ENCODE measurements at regions of chr2 and their contacts with region 1.

Region 1: DNA sequence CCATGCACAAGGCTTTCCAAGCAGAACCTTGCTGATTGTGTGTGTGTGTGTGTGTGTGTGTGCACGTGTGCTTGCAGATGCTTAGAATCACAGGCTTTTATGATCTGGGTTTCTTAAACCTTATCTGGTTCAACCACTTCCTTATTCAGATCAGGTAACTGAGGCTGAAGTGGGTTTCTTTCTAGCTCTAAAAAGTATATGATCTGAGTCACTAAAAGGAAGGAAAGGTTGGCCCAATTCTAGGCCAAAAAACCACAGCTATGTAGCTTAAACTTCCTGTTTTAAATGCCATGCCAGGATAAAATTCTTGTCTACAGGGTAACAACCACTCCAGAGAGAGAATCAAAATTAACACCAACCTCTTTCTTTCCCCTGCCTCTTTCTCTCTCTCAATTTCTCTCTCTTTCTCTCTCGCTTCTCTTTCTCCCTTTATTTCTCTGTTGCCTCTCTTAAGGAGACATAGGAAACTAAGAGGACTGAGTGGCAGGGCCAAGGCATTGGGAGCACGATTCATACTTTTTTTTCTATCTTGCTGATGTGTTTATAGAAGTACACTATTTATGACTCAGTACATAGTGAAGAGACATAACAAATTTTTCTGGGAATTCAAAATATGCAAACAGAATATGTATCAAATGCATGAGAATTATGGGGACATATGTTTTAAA is 140.3 kb downstream of the TRIB2 start:
- DNase-seq: peak; percentile 31 to 98
- H3K4me3 ChIP-seq: peak overlapping the region; percentile 30; the same call in 1 of the 2 replicates
- H3K27ac ChIP-seq: peak overlapping the region; percentile 92
- H3K4me1 ChIP-seq: peaks cover 46% of the 10 kb centered on the region
- H3K27me3 ChIP-seq: no peaks in the 10 kb centered on the region
- CTCF ChIP-seq: no peak

Region 2: GRCh38 chr2:12828784-12829379 is 28.2 kb before region 1 on chr2:
- CTCF ChIA-PET with region 1: no interaction called
- POLR2A ChIA-PET with region 1: no interaction called
- intact Hi-C with region 1: no loop called
- DNase-seq: no peak
- H3K4me3 ChIP-seq: no peak overlapping the region
- H3K27ac ChIP-seq: no peak overlapping the region
- H3K4me1 ChIP-seq: no peaks in the 10 kb centered on the region
- H3K27me3 ChIP-seq: no peaks in the 10 kb centered on the region
- CTCF ChIP-seq: no peak

Region 3: DNA sequence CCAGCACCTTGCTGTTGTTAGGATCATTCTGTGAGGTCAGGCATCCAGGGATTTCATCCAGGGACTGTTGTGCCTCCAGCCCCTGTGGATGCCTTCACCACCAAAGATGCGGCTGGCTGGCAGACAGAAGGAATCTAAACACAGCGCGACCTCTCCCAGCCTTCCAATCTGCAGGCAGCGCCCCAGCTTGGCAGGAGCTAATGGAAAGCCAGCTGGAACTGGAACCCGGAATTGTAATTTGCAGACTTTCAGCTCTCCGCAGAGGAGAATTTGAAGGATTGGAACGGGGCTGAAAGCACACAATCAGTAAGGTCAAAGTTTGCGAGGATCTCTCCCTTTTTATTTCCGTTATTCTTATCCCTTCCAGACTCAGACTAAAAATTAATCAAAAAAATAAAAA is 12.6 kb before region 1 on chr2:
- CTCF ChIA-PET with region 1: no interaction called
- POLR2A ChIA-PET with region 1: no interaction called
- intact Hi-C with region 1: no loop called
- DNase-seq: peak in 1 of 2 experiments; percentile 12
- H3K4me3 ChIP-seq: no peak overlapping the region
- H3K27ac ChIP-seq: no peak overlapping the region
- H3K4me1 ChIP-seq: peaks cover 15% of the 10 kb centered on the region
- H3K27me3 ChIP-seq: no peaks in the 10 kb centered on the region
- CTCF ChIP-seq: no peak

Region 4: DNA sequence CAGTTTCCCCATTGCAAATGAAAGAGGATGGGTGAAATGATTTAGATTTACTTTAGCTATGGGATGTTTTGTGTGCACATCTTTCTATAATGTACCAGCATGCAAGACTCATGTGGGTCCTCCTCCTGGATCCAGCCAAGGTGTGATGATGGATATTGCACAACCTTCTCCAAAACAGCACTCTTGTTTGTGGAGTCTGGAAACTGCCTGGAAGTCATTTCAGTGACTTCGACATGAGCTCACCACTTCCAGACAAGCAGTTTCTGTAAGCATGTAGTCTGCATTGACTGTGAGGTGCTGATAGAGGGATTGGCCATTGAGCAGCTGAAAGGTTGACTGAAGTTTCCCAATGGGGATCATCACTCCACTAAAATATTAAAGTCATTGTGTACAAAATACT is 13.6 kb after region 1 on chr2:
- CTCF ChIA-PET with region 1: no interaction called
- POLR2A ChIA-PET with region 1: interaction called, 10 read pairs
- intact Hi-C with region 1: no loop called
- DNase-seq: no peak
- H3K4me3 ChIP-seq: no peak overlapping the region
- H3K27ac ChIP-seq: no peak overlapping the region
- H3K4me1 ChIP-seq: no peaks in the 10 kb centered on the region
- H3K27me3 ChIP-seq: no peaks in the 10 kb centered on the region
- CTCF ChIP-seq: no peak

Region 5: DNA sequence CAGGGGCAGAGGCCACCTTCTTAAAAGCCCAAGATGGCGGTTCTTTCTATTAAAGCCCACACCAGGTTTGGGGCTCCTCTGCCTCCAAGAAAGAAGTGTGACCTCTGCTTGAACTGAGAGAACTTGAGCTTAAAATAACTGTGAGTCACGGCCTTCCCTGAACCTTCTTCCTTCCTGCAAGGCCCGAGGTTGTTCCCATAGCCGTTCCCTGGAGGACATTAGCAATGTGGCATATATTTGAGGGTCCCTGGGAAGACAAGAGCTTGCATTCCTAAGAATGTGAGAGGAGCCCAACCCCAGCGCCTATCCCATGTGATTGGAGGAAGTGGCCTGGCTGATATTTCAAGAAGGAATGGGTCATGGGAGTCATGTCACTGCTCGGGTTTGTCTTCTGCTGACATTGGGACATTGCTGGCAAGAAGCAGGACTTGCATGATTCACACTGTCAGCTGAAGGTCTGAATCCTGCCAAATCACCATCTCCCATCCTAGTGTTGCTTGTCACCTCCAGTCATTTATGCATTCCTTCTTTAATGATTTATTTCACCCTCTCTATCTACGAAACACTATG is 27.7 kb after region 1 on chr2:
- CTCF ChIA-PET with region 1: no interaction called
- POLR2A ChIA-PET with region 1: no interaction called
- intact Hi-C with region 1: loop called (anchors 1 kb)
- DNase-seq: peak; percentile 72 to 99
- H3K4me3 ChIP-seq: no peak overlapping the region; the same call in 1 of the 2 replicates
- H3K27ac ChIP-seq: peak overlapping the region; percentile 91
- H3K4me1 ChIP-seq: peaks cover 37% of the 10 kb centered on the region
- H3K27me3 ChIP-seq: no peaks in the 10 kb centered on the region
- CTCF ChIP-seq: no peak

Measured in PC-9 (cell line).